Left cardiac atrium (tissue), 4 donors: ENCODE measurements at regions of chr6 and their contacts with region 1.

Region 1: DNA sequence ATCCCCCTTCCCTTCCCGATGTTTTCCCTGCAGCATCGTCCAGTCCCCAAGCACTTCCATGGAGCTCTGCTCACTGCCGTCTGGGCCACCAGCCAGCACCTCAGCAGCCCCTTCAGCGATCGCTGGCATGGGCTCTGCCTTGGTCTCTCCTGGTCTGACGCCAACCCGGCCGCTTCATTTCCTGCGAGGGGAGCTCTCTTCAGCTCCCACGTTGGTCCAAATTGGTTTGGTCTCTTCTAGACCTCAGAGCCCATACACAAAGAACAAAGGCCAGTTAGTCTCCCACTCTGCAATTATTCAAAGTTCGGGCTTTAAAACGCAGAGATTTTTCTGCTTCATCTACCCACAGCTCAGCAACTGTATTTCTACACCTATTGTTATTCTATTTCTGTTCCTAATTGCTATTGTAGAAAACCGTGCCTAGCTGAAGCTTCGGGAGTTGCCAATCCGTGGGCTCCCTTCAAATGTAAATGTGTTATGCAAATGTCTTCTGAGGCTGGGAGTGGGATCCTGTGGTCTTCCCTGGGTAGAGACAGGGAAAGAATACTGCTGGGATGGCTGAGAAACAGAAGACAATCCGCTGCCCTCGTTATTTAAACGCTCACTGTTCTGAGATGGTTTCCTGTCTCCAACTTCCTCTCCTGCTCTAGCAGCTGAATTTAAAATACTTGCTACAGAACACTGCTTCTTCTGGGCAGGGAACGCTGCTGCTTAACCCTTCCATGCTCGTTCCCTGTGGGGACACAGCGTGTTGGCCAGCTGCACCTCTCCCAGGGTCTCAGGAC is 154.2 kb upstream of the QKI start:
- DNase-seq: peak; percentile 51
- ATAC-seq: peak; percentile 47 to 64

Region 2: DNA sequence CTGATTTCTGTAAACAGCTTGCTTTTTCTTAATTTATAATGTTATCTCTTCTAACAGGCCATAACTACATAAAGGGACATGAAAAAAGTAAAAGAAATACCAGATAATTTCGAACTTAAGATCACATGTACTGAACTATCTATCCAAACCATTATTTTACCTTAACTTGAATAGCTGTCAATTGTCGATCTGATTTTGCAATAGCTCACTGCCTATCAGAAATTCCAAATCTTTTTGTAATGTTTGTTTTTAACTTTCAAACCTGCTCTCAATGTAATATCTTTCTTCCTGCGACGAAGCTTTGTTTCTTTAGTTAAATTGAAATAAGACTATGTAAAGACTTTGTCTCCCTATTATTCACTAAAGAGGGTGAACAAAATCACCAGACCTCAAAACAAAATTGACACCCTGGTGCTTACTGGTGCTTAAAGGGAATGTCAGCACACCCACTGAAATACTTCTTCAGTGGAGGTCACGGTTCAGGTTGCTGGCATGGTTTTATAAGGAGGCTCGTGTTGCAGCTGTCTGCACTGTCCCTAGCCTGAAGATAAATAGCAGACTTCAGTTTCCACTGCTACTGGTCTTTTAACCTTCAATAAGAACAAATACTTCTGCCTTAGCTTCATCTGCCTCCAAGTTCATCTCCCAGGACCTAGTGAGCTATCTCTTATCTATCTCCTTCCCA is 36.7 kb after region 1 on chr6:
- intact Hi-C with region 1: loop called in 1 of 2 experiments (anchors 5 kb)
- DNase-seq: no peak
- ATAC-seq: peak; percentile 75 to 82

Region 3: DNA sequence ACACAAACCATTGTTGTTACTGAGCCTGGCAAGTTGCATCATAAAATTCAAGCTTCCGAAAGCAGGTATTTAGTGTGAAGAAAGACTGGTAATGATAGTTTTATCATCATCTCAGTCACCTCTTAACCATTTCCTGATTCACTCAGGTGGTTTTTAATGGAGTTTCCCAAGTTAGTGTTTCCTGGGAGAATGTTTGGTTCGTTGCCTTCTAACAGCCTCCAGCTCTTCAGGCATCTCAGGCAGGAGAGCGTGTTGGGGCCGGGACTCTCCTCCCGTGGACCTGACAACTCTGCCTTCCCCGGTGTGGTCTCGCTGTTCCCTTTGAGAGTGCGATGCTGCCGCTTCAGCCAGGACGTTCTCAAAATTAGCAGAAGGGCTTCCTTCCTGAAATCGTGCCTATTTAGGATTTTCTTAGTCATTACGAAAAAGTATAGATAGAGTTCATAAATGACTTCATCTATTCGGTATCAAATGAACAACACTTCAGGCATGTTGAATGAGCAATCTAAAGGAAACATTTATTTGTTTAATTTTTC is 49.3 kb after region 1 on chr6:
- intact Hi-C with region 1: no loop called
- DNase-seq: no peak
- ATAC-seq: no peak

Region 4: GRCh38 chr6:163554663-163555062 is 294.4 kb after region 1 on chr6:
- intact Hi-C with region 1: no loop called
- DNase-seq: peak; percentile 35
- ATAC-seq: peak in 1 of 2 donors; percentile 54

Region 5: GRCh38 chr6:163605385-163606097 is 345.2 kb after region 1 on chr6:
- intact Hi-C with region 1: no loop called
- DNase-seq: no peak
- ATAC-seq: no peak